Dorsolateral prefrontal cortex (tissue), 120 donors: ENCODE measurements at regions of chr20 and their contacts with region 1.

Region 1: DNA sequence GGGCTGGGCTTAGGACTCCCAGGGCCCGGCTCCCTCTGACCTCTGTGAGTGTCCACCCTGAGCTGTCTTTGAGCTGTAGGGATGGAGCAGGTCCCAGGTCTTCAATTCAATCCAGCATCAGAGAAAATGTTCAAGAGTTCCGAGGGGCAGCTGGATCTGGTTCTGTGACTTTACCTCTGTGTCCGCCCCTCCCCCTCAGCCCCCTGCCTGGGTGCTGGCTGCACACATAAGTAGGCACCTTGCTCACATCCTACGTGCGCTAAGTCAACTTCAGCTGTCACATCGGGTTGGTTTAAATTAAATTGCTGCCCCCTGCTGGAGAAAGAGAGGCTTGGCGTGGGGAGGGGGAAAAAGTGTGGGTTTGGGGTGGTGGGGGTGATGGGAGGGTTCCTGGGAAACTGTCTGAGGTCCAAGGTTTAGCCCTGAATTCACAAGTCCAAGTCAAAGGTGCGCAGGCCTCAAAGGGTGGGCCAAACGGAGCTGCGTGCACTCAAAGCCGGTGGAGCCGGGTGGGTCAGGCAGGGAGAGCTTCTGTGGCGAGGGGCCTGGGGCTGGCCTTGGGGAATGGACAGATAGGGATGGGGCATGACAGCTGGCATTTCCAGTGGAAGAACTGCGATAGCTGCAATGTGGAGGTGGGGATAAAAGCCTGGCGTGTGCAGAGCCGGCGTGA is 3.0 kb downstream of the WFDC5 start:
- DNase-seq: no peak
- H3K4me3 ChIP-seq: no peak overlapping the region
- H3K27ac ChIP-seq: no peak overlapping the region
- H3K27me3 ChIP-seq: peaks cover 0 to 2% (median 0%) of the 10 kb centered on the region in 45 donors
- CTCF ChIP-seq: peak in 54 of 56 donors; percentile 9 to 75 (median 54)

Region 2: GRCh38 chr20:45044084-45044573 is 67.8 kb before region 1 on chr20:
- intact Hi-C with region 1: loop called in 1 of 2 experiments (anchors 5 kb)
- DNase-seq: peak in 1 of 10 donors; percentile 50
- H3K4me3 ChIP-seq: peak overlapping the region in 1 of 59 donors; percentile 12
- H3K27ac ChIP-seq: peak overlapping the region in 12 of 59 donors; percentile 26 to 62 (median 45)
- H3K27me3 ChIP-seq: no peaks in the 10 kb centered on the region
- CTCF ChIP-seq: peak; percentile 72 to 98 (median 91)